ENCODE measurements at regions of chr18 and their contacts with region 1.

Region 1: GRCh38 chr18:43919551-43919950 is 642.3 kb upstream of the SYT4 start:
- DNase-seq: no peak
- ATAC-seq: no peak

Region 2: DNA sequence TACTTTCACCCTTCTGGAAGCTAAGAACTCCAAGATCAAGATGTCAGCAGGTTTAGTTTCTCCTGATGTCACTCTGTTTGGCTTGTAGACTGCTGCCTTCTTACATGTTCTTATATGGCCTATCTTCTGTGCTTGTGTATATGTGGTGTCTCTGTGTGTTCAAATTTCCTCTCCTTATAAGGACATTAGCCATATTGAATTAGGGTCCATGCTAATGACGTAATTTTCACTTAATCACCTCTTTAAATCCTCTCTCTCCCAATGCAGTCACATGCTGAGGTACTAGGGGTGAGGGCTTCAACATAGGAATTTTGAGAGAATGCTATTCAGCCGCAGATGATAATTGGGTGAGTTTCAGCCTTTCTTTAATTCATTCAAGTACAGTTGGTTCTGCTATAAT is 184.0 kb before region 1 on chr18:
- intact Hi-C with region 1: no loop called
- DNase-seq: no peak
- ATAC-seq: no peak

Region 3: GRCh38 chr18:43978174-43978573 is 58.6 kb after region 1 on chr18:
- intact Hi-C with region 1: loop called (anchors 5 kb)
- DNase-seq: no peak
- ATAC-seq: no peak